HEK293 (cell line): ENCODE measurements at regions of chr5 and their contacts with region 1.

Region 1: GRCh38 chr5:122515709-122516431 is 203.8 kb downstream of the SNCAIP start:
- H3K4me3 ChIP-seq: no peak overlapping the region
- H3K27ac ChIP-seq: no peak overlapping the region
- H3K4me1 ChIP-seq: no peaks in the 10 kb centered on the region
- CTCF ChIP-seq: peak; percentile 85

Region 2: DNA sequence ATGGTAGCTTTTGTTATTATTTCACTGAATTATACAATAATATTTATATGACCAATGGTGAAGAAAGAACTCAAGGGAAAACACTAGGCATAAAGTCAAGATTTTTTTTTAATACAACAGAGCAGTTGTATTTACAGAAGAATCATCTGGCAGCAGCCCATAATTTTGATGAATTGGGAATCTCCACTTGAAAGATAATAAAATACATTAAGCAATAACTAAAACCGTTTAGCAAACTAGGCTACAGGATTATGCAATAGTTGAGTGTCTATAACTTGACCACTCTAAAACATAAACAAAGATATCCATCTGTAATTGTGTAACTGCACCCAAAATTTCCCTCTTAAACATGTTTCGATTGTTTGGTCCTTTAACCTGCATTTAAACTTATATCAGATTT is 123.0 kb before region 1 on chr5:
- CTCF ChIA-PET with region 1: no interaction called
- POLR2A ChIA-PET with region 1: no interaction called
- H3K4me3 ChIP-seq: no peak overlapping the region
- H3K27ac ChIP-seq: no peak overlapping the region
- H3K4me1 ChIP-seq: peaks cover 29% of the 10 kb centered on the region
- CTCF ChIP-seq: no peak

Region 3: DNA sequence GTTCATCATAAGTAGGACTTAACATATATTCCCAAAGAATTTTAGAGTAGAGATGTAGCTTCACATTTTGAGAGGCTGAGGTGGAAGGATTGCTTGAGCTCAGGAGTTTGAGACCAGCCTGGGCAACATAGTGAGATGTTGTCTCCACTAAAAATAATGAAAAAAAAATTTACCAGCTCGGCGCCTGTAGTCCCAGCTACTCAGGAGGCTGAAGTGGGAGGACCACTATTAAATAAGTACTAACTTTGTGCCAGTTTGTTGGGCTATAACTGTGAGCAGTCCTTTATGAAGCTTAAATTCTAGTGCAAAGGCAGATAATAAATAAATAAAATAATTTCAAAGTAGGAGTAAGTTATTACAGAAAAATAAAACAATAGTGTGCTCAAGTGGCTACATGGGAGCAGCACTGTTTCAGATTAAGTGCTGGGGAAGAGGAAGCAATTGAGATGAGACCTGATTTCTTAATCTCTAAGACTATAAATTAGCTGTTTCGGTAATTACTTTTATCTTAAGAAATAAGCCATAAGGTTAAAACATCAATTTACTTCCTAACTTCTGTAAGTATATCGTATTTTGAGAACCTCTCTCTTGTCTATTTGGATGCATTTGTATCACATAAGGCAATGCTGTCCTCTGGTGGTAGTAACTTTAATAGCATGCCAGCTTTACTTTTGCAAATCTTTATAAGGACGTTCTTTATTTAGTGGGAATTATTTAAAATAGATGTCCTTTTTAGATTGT is 1095.0 kb after region 1 on chr5:
- CTCF ChIA-PET with region 1: interaction called, 13 read pairs
- POLR2A ChIA-PET with region 1: no interaction called
- H3K4me3 ChIP-seq: no peak overlapping the region
- H3K27ac ChIP-seq: no peak overlapping the region
- H3K4me1 ChIP-seq: no peaks in the 10 kb centered on the region
- CTCF ChIP-seq: peak; percentile 71